Posterior vena cava (tissue), 2 donors: ENCODE measurements at regions of chr22 and their contacts with region 1.

Region 1: DNA sequence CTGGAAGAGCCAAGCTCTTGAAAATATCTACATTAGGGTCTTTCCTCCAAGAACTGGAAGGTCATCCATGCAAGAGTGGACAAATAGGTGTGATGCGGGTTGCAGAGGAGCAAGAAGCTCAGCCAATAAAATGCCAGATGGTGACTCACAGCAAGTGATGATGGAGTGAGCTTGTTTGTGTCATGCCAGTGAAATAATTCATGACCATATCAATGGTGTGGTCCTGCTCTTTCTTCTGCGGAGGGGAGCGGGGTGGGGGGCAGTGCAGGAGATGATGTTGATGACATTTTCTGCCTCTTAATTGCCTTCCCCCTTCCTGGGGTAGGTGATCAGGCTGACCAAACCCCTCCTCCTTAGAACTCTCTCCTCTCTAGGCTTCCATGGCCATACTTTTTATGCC is 118.5 kb upstream of the TIMP3 start:
- DNase-seq: no peak

Region 2: DNA sequence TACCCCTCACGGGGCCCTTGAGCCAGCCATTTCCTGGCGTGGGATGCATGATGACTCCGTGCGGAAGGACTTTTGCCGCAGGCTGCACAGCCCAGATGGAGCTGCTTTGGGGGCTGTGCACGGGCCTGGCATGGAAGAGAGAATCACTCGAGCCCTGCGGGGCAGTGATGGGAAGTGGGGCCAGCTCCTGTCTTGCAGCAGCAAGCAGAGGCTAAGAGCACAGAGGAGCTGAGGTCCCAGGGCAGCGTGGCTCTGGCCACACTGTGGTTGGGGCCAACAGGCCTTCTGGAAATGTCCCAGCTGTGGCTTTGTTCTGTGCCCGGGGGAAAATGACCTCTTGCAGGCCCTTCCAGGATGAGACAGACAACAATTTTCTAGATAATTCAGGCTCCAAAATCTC is 25.8 kb after region 1 on chr22:
- intact Hi-C with region 1: loop called in 1 of 2 experiments (anchors 1 kb)
- DNase-seq: peak; percentile 86